ENCODE measurements at regions of chr1 and their contacts with region 1.

Region 1: GRCh38 chr1:173420330-173420806 is 56.8 kb upstream of the PRDX6 start:
- DNase-seq: no peak
- ATAC-seq: peak; percentile 21
- H3K4me3 Mint-ChIP-seq: peak overlapping the region; percentile 60
- H3K27ac Mint-ChIP-seq: peak overlapping the region; percentile 95
- H3K4me1 Mint-ChIP-seq: peaks cover 63% of the 10 kb centered on the region
- H3K27me3 Mint-ChIP-seq: no peaks in the 10 kb centered on the region
- CTCF ChIP-seq: no peak

Region 2: GRCh38 chr1:173134029-173134428 is 286.3 kb before region 1 on chr1:
- CTCF ChIA-PET with region 1: no interaction called
- POLR2A ChIA-PET with region 1: no interaction called
- intact Hi-C with region 1: no loop called
- DNase-seq: no peak
- ATAC-seq: no peak
- H3K4me3 Mint-ChIP-seq: no peak overlapping the region
- H3K27ac Mint-ChIP-seq: no peak overlapping the region
- H3K4me1 Mint-ChIP-seq: no peaks in the 10 kb centered on the region
- H3K27me3 Mint-ChIP-seq: no peaks in the 10 kb centered on the region
- CTCF ChIP-seq: no peak

Region 3: GRCh38 chr1:173195596-173196088 is 224.7 kb before region 1 on chr1:
- CTCF ChIA-PET with region 1: no interaction called
- POLR2A ChIA-PET with region 1: interaction called, 11 read pairs
- intact Hi-C with region 1: no loop called
- DNase-seq: peak; percentile 31
- ATAC-seq: peak; percentile 93
- H3K4me3 Mint-ChIP-seq: peak overlapping the region; percentile 61
- H3K27ac Mint-ChIP-seq: peak overlapping the region; percentile 88
- H3K4me1 Mint-ChIP-seq: peaks cover 36% of the 10 kb centered on the region
- H3K27me3 Mint-ChIP-seq: no peaks in the 10 kb centered on the region
- CTCF ChIP-seq: no peak

Region 4: DNA sequence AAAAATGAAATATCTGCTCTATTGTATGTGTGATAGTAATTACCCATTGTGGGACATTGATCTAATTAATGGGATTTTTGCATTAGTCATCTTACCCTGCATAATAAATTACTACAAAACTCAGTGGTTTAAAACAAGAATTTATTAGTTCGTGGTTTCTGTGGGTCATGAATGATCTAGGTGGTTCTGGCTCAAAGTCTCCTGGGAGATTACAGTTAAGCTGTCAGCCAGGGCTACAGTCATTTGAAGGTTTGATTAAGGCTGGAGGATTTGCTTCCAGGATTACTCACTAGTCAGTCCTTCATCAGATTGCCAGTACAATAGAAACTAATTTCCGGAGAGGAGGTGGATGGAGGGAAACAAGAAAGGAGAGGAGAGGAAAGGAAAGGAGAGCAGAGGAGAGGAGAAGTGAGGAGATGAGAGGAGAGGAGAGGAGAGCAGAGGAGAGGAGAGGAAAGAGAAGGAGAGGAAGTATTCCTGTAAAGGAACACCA is 152.9 kb before region 1 on chr1:
- CTCF ChIA-PET with region 1: interaction called, 3 read pairs
- POLR2A ChIA-PET with region 1: interaction called, 4 read pairs
- intact Hi-C with region 1: loop called (anchors 1 kb)
- DNase-seq: no peak
- ATAC-seq: peak; percentile 65
- H3K4me3 Mint-ChIP-seq: no peak overlapping the region
- H3K27ac Mint-ChIP-seq: no peak overlapping the region
- H3K4me1 Mint-ChIP-seq: peaks cover 21% of the 10 kb centered on the region
- H3K27me3 Mint-ChIP-seq: no peaks in the 10 kb centered on the region
- CTCF ChIP-seq: no peak

Region 5: GRCh38 chr1:173476664-173477285 is 56.4 kb after region 1 on chr1:
- CTCF ChIA-PET with region 1: no interaction called
- POLR2A ChIA-PET with region 1: interaction called, 25 read pairs
- intact Hi-C with region 1: loop called (anchors 2 kb)
- DNase-seq: peak; percentile 70
- ATAC-seq: peak; percentile 94
- H3K4me3 Mint-ChIP-seq: peak overlapping the region; percentile 92
- H3K27ac Mint-ChIP-seq: peak overlapping the region; percentile 95
- H3K4me1 Mint-ChIP-seq: peaks cover 40% of the 10 kb centered on the region
- H3K27me3 Mint-ChIP-seq: no peaks in the 10 kb centered on the region
- CTCF ChIP-seq: no peak

Region 6: DNA sequence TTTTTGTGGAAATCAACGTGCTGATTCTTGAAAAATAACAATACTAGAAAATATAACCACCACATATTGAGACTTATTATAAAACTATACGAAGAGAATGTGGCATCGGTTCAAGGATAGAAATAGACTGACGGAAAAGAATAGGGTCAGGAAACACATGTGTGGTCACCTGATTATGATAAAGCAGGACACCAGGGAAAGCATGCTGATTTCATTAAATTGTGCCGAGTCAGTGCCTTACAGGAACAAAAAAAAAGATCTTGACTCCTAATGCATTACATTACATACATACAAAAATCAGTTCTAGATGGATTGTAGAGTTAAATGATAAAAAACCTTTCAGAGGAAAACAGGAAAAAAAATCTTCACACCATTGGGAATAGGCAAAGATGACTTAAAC is 540.3 kb after region 1 on chr1:
- CTCF ChIA-PET with region 1: no interaction called
- POLR2A ChIA-PET with region 1: no interaction called
- intact Hi-C with region 1: loop called (anchors 5 kb)
- DNase-seq: no peak
- ATAC-seq: no peak
- H3K4me3 Mint-ChIP-seq: no peak overlapping the region
- H3K27ac Mint-ChIP-seq: no peak overlapping the region
- H3K4me1 Mint-ChIP-seq: no peaks in the 10 kb centered on the region
- H3K27me3 Mint-ChIP-seq: no peaks in the 10 kb centered on the region
- CTCF ChIP-seq: no peak

Region 7: GRCh38 chr1:174031099-174031498 is 610.7 kb after region 1 on chr1:
- CTCF ChIA-PET with region 1: no interaction called
- POLR2A ChIA-PET with region 1: no interaction called
- intact Hi-C with region 1: no loop called
- DNase-seq: no peak
- ATAC-seq: no peak
- H3K4me3 Mint-ChIP-seq: no peak overlapping the region
- H3K27ac Mint-ChIP-seq: no peak overlapping the region
- H3K4me1 Mint-ChIP-seq: no peaks in the 10 kb centered on the region
- H3K27me3 Mint-ChIP-seq: no peaks in the 10 kb centered on the region
- CTCF ChIP-seq: no peak

Region 8: DNA sequence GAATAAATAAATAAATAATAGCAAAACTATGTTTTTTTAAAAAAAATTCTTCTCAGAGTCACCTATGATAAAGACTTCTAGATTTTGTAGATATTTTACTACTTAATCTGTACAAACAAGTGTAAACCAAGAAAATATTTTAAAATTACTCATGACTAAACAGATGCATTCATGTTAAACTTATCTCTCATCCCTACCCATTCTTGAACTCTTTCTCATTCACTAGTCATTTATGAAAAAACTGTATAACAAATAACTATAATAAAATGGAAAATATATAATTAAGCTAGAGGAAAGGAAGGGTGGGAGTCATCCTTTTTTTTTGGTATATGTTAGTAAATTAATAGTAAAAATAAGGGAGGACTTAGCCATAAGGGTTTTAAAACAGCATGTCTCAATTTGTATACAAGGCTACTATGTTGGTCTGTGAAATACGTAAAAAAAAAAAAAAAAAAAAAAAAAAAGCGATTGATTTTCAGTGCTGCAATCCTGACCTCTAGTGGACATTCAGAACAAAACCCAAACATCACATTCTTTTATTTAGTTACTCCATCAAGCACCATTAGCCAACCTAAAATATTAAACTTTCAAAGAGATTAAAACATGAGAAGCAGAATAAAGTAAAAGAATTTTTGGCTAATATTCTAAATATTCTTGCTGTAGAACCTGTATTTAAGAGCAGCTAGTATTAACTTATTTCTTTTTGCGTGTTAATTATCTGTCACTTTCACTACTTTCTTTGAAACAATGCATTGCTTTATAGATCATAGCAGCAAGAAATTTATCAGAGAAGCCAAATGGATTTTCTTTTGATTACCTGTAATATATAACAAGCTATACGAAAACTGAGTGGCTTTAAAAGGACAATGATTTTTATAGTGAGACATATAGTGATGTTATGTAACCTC is 1323.5 kb after region 1 on chr1:
- CTCF ChIA-PET with region 1: interaction called, 3 read pairs
- POLR2A ChIA-PET with region 1: no interaction called
- intact Hi-C with region 1: loop called (anchors 5 kb)
- DNase-seq: no peak
- ATAC-seq: peak; percentile 31
- H3K4me3 Mint-ChIP-seq: no peak overlapping the region
- H3K27ac Mint-ChIP-seq: no peak overlapping the region
- H3K4me1 Mint-ChIP-seq: peaks cover 38% of the 10 kb centered on the region
- H3K27me3 Mint-ChIP-seq: no peaks in the 10 kb centered on the region
- CTCF ChIP-seq: no peak